ENCODE measurements at regions of chr2 and their contacts with region 1.

Region 1: DNA sequence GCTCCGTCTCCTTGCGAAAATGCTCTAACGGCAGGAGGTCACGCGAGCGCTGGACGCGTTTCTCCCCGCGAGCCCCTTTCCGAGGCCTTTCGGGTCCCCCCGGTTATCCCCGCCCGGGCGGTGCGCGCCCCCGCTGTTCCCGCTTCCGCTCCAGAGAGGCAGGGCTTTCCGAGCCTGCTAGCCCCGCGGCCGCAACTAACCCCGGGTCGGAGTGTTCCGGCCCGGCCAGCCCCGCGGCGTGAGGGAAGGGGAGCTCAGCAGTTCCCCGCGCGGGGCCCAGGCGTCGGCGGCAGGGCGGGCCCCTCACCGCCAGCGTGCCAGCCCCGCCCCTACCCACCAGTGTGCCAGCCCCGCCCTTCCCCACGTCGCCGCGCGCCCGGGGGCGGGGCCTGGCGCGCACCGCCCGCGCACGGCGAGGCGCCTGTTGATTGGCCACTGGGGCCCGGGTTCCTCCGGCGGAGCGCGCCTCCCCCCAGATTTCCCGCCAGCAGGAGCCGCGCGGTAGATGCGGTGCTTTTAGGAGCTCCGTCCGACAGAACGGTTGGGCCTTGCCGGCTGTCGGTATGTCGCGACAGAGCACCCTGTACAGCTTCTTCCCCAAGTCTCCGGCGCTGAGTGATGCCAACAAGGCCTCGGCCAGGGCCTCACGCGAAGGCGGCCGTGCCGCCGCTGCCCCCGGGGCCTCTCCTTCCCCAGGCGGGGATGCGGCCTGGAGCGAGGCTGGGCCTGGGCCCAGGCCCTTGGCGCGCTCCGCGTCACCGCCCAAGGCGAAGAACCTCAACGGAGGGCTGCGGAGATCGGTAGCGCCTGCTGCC is at the start of gene MSH6:
- DNase-seq: peak; percentile 93
- H3K4me3 ChIP-seq: peak within 1 kb of the TSS; percentile 100
- H3K27ac ChIP-seq: peak within 1 kb of the TSS; percentile 93
- H3K4me1 ChIP-seq: peaks cover 54% of the 10 kb centered on the region
- CTCF ChIP-seq: no peak; the same call in 1 of the 2 replicates
- total RNA-seq, gene MSH6: 291 and 303 TPM in 2 replicates

Region 2: GRCh38 chr2:47402805-47403608 is 379.9 kb before region 1 on chr2 and contains the start of gene MSH2:
- CTCF ChIA-PET with region 1: no interaction called
- POLR2A ChIA-PET with region 1: no interaction called
- intact Hi-C with region 1: loop called (anchors 5 kb)
- DNase-seq: peak; percentile 98
- H3K4me3 ChIP-seq: peak within 1 kb of the TSS; percentile 86
- H3K27ac ChIP-seq: peak within 1 kb of the TSS; percentile 68
- H3K4me1 ChIP-seq: peaks cover 20% of the 10 kb centered on the region
- CTCF ChIP-seq: no peak; the same call in 1 of the 2 replicates
- total RNA-seq, gene MSH2: 96.8 and 107 TPM in 2 replicates

Region 3: GRCh38 chr2:47503481-47504070 is 279.3 kb before region 1 on chr2:
- CTCF ChIA-PET with region 1: no interaction called
- POLR2A ChIA-PET with region 1: no interaction called
- intact Hi-C with region 1: loop called (anchors 5 kb)
- DNase-seq: peak; percentile 81
- H3K4me3 ChIP-seq: peak overlapping the region; percentile 43
- H3K27ac ChIP-seq: peak overlapping the region; percentile 92
- H3K4me1 ChIP-seq: peaks cover 37% of the 10 kb centered on the region
- CTCF ChIP-seq: no peak

Measured in OCI-LY7 (cell line).